Breast epithelium (tissue), 4 donors: ENCODE measurements at regions of chr14 and their contacts with region 1.

Region 1: GRCh38 chr14:41723204-41723603 is 116.5 kb downstream of the LRFN5 start:
- DNase-seq: no peak
- H3K4me3 ChIP-seq: no peak overlapping the region
- H3K27ac ChIP-seq: no peak overlapping the region
- H3K4me1 ChIP-seq: no peaks in the 10 kb centered on the region
- H3K27me3 ChIP-seq: no peaks in the 10 kb centered on the region
- CTCF ChIP-seq: no peak
- POLR2A ChIP-seq: no peak

Region 2: GRCh38 chr14:41743140-41743539 is 19.9 kb after region 1 on chr14:
- intact Hi-C with region 1: no loop called
- DNase-seq: no peak
- H3K4me3 ChIP-seq: no peak overlapping the region
- H3K27ac ChIP-seq: no peak overlapping the region
- H3K4me1 ChIP-seq: no peaks in the 10 kb centered on the region
- H3K27me3 ChIP-seq: no peaks in the 10 kb centered on the region
- CTCF ChIP-seq: no peak
- POLR2A ChIP-seq: no peak

Region 3: DNA sequence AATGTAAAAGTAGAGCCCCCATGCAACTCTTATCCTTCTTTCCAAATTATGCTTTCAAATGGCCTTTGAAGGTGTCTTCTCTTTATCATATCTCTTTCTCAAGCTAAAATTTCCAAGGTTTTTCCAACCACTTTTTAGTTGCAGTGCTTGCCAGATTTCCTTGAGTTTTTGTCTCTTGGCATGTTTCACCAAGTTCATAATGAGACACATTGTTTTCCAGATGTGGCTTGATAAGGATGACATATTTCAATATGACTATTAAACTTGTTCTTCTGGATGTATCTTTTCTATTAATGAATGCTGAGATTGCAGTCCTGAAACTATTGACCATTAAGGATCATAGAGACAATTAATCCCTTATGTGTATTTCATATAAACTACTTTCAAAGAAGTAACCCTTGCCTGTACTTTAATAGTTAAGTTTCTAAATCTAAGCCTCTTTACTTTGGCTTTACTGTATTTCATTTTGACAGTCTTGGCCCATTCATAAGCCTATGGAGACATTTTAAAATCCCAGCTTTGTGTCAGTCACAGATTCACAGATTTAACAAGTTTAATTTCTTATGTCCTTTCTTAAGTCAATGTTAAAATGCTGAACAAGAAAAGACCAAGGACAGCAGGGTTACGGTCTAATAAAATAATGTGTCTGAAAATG is 34.9 kb after region 1 on chr14:
- intact Hi-C with region 1: loop called (anchors 2 kb)
- DNase-seq: no peak
- H3K4me3 ChIP-seq: no peak overlapping the region
- H3K27ac ChIP-seq: no peak overlapping the region
- H3K4me1 ChIP-seq: no peaks in the 10 kb centered on the region
- H3K27me3 ChIP-seq: no peaks in the 10 kb centered on the region
- CTCF ChIP-seq: no peak
- POLR2A ChIP-seq: no peak